MCF 10A (cell line): ENCODE measurements at regions of chr3 and their contacts with region 1.

Region 1: DNA sequence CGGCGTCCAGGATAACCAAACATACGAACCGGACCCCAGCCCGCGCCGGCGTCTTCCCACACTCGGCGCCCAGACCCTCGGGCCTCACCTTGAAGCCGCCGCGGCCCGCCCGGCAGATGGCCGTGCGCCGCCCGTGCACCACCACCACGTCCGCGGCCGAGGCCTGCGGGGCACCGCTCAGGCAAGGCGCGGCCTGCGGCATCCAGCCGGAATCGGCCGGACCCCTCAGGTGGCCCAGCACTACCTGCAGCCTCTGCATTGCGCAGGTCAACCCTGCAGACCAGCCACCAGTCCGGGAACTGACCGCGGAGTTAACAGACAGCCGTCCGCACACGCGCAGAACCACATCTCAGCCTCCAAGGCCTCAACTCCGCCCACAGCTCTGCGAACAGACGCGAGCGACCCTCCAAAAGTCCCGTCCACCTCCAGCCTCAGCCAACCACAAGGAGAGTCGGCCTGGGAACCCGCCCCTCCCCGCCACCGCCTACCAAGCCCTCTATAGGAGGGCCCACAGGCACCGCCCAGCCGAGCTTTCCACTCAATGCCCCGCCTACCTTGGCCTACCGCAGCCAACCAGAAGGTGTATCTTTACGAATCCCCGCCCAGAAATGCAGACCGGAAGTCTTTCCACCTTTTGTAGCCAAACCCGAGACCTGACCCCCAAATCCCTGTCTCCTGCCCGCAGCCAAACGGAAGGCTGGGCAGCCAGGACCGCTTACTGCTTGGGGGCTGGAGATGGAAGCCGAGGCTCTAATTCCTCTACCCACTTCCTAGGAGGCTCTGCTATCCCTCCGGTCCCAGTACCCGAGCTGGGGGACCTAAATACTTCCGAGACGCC is at the start of gene ACAA1:
- DNase-seq: peak; percentile 99
- H3K4me3 Mint-ChIP-seq: peak within 1 kb of the TSS; percentile 81
- H3K27ac Mint-ChIP-seq: peak within 1 kb of the TSS; percentile 71
- H3K4me1 Mint-ChIP-seq: peaks cover 51% of the 10 kb centered on the region
- H3K27me3 Mint-ChIP-seq: no peaks in the 10 kb centered on the region
- CTCF ChIP-seq: no peak
- total RNA-seq, gene ACAA1: 36.6 and 46.7 TPM in 2 replicates

Region 2: DNA sequence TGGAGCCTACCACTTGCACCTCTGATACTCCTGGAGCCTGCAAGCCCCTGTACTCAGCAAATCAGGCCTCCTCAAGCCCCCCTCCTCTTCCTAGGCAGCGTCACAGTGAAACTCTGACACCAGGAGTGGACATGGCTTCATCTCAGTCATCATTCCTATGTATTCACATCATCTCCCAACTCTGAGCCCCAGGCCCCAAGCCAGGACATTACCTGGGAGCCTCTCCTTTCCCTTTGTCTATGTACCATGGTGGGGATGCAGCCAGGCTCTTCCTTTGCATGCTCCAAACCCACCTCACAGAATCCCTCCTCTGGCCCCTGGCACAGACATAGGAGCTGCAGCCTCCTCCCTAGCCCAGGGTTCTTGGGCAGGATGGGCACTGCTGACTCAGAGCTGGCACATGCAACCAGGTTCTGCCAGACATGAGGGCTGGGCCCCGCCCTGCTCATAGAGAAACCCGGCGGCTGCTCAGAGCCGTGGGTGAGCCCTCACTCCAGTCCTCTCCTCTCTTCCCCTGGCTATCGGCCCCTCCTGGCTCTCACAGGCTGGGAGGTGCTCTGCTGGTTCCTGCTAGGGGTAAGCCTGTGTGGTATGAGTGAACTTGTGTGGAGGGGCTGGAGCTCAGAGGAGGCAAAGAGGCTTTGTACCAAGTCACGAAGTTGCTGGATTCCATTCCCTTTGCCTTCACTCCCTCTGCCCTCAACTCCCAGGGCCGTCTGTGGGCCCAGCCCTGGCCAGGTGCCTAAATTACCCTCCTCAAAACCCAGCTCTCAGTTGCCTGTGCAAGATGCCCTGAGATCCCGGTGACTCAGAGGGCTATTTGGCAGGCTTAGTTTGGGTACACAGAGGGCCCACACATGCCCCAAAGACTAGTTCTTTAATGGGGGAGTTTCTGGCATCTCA is 105.7 kb before region 1 on chr3:
- CTCF ChIA-PET with region 1: no interaction called
- POLR2A ChIA-PET with region 1: interaction called, 12 read pairs
- intact Hi-C with region 1: no loop called
- DNase-seq: peak; percentile 93
- H3K4me3 Mint-ChIP-seq: peak overlapping the region; percentile 5
- H3K27ac Mint-ChIP-seq: peak overlapping the region; percentile 78
- H3K4me1 Mint-ChIP-seq: peaks cover 19% of the 10 kb centered on the region
- H3K27me3 Mint-ChIP-seq: no peaks in the 10 kb centered on the region
- CTCF ChIP-seq: no peak

Region 3: GRCh38 chr3:38154033-38154494 is 17.1 kb after region 1 on chr3:
- CTCF ChIA-PET with region 1: interaction called, 10 read pairs
- POLR2A ChIA-PET with region 1: interaction called, 199 read pairs
- intact Hi-C with region 1: no loop called
- DNase-seq: peak; percentile 84
- H3K4me3 Mint-ChIP-seq: no peak overlapping the region
- H3K27ac Mint-ChIP-seq: peak overlapping the region; percentile 74
- H3K4me1 Mint-ChIP-seq: peaks cover 23% of the 10 kb centered on the region
- H3K27me3 Mint-ChIP-seq: no peaks in the 10 kb centered on the region
- CTCF ChIP-seq: no peak

Region 4: DNA sequence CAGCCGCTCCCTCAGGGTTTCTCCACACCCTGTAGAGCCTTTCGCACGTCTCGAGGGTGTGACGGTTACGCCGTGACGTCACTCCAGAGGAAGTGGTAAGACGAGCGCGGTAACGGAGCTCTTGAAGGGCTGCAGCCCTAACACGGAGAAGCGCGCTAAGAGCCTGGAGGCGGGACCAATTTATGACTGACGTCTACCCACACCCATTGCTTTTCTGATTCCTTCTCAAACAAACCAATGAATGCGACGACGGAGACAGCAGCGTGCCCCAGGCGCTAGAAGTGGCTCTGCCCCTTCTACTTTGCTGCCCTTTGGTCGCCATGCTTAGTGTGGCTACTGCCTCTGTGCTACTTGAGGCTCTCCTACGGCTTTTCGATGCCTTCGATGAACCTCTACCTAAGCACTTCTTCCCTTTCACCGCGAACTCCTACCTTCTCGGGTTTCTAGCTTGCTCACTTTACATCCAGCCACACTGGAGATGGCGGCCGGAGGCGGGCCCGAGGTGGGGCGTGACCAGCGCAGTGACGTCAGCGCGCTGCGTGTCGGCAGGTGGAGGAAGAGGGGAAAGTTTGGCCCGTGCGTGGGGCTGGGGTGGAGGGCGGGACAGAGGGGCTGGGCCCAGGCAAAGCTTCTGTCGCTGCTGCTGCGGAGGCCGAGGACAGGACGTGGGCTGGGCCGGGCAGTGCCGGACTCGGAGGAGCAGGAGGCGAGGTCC is 28.1 kb after region 1 on chr3 and contains the start of gene OXSR1:
- CTCF ChIA-PET with region 1: interaction called, 7 read pairs
- POLR2A ChIA-PET with region 1: interaction called, 199 read pairs
- intact Hi-C with region 1: loop called (anchors 2 kb)
- DNase-seq: peak; percentile 99
- H3K4me3 Mint-ChIP-seq: peak within 1 kb of the TSS; percentile 87
- H3K27ac Mint-ChIP-seq: peak within 1 kb of the TSS; percentile 93
- H3K4me1 Mint-ChIP-seq: peaks cover 29% of the 10 kb centered on the region
- H3K27me3 Mint-ChIP-seq: no peaks in the 10 kb centered on the region
- CTCF ChIP-seq: no peak
- total RNA-seq, gene OXSR1: 71.7 and 75.5 TPM in 2 replicates

Region 5: DNA sequence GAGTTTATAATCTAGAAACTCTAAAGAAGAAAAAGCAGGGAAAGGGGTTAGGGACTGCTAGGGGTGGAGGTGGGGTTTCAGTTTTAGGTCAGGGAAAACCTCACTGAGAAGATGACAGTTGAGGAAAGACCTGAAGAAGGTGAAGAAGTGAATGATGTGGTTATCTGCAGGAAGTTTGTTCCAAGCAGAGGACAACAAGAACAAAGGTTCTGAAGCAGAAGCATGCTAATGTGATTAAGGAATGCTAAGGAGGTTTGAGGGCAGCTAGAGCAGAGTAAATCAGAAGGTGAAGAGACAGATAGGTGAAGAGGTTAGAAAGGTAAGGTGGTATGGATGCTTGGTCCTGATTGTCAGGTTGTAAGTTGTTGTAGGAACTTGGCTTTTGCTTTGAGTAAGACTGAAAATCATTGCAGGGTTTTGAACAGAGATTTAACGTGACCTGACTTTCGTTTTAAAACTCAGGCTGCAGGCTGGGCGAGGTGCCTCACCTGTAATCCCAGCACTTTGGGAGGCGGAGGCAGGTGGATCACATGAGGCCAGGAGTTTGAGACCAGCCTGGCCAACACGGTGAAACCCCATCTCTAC is 36.9 kb after region 1 on chr3:
- CTCF ChIA-PET with region 1: interaction called, 3 read pairs
- POLR2A ChIA-PET with region 1: interaction called, 16 read pairs
- intact Hi-C with region 1: no loop called
- DNase-seq: no peak
- H3K4me3 Mint-ChIP-seq: no peak overlapping the region
- H3K27ac Mint-ChIP-seq: peak overlapping the region; percentile 70
- H3K4me1 Mint-ChIP-seq: peaks cover 36% of the 10 kb centered on the region
- H3K27me3 Mint-ChIP-seq: no peaks in the 10 kb centered on the region
- CTCF ChIP-seq: no peak

Region 6: GRCh38 chr3:38227989-38228388 is 91.0 kb after region 1 on chr3:
- CTCF ChIA-PET with region 1: interaction called, 3 read pairs
- POLR2A ChIA-PET with region 1: interaction called, 4 read pairs
- intact Hi-C with region 1: loop called (anchors 5 kb)
- DNase-seq: peak; percentile 36
- H3K4me3 Mint-ChIP-seq: peak overlapping the region; percentile 32
- H3K27ac Mint-ChIP-seq: peak overlapping the region; percentile 93
- H3K4me1 Mint-ChIP-seq: peaks cover 19% of the 10 kb centered on the region
- H3K27me3 Mint-ChIP-seq: no peaks in the 10 kb centered on the region
- CTCF ChIP-seq: no peak

Region 7: DNA sequence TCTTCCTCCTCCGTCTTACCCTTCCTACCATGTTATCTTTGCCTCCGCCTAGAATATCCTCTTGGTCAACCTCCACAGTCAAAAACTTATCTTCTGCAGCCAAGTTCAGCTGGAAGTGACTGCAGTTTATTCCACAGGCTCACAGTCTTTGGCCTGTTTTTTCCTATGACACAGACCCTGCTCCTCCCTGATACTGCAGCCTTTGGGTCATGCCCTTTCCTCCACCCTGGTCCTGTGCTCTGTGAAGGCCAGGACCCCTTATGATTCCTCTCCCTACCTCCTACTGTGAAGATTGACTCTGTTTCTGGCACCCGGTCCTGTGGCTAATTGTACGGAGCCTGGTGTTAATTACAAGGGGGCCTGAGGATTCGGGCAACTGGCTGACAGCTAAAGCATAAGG is 561.8 kb after region 1 on chr3:
- CTCF ChIA-PET with region 1: no interaction called
- POLR2A ChIA-PET with region 1: no interaction called
- intact Hi-C with region 1: no loop called
- DNase-seq: no peak
- H3K4me3 Mint-ChIP-seq: no peak overlapping the region
- H3K27ac Mint-ChIP-seq: no peak overlapping the region
- H3K4me1 Mint-ChIP-seq: no peaks in the 10 kb centered on the region
- H3K27me3 Mint-ChIP-seq: no peaks in the 10 kb centered on the region
- CTCF ChIP-seq: no peak